ENCODE measurements at regions of chr1 and their contacts with region 1.

Region 1: DNA sequence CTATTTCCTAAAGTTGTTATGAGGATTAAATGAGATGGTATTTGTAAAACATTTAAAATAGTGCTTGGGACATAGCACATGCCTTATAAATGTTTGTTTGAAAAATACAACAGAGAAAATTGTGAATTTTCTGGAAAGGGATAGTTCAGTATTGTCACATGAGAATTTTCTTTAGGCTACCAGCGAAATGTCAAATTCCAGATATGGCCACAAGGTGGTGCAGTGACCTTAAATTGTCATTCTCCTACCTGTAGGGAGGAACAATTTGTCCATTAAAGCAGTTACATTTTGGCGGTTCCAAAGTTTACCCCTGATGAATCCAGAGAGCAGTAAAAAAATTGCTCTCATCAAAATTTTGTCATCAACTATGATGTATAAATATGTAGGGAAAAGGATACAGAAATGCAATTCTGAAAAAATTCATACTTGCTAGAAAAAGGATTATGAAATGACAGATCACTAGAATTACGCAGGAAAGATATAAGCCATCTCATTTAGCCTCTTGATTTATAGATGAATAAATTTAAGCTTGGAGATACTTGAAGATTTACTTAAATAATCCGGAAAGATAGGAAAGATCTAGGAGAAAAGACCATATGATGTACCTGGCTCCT is 50.2 kb upstream of the TSHB start:
- DNase-seq: peak in 1 of 2 donors; percentile 27
- ATAC-seq: no peak
- H3K4me3 ChIP-seq: no peak overlapping the region
- H3K27ac ChIP-seq: no peak overlapping the region
- H3K4me1 ChIP-seq: no peaks in the 10 kb centered on the region
- H3K27me3 ChIP-seq: no peaks in the 10 kb centered on the region
- CTCF ChIP-seq: peak; percentile 64 to 78 (median 67)
- POLR2A ChIP-seq: no peak

Region 2: GRCh38 chr1:115052454-115053083 is 73.2 kb after region 1 on chr1:
- in situ Hi-C with region 1: no loop called
- intact Hi-C with region 1: loop called (anchors 5 kb)
- DNase-seq: peak in 1 of 2 donors; percentile 39
- ATAC-seq: peak in 1 of 2 donors; percentile 81
- H3K4me3 ChIP-seq: no peak overlapping the region
- H3K27ac ChIP-seq: no peak overlapping the region
- H3K4me1 ChIP-seq: no peaks in the 10 kb centered on the region
- H3K27me3 ChIP-seq: no peaks in the 10 kb centered on the region
- CTCF ChIP-seq: peak; percentile 51 to 78 (median 59)
- POLR2A ChIP-seq: no peak

Region 3: GRCh38 chr1:115107516-115108260 is 128.3 kb after region 1 on chr1:
- in situ Hi-C with region 1: loop called (anchors 5 kb)
- intact Hi-C with region 1: no loop called
- DNase-seq: no peak
- ATAC-seq: no peak
- H3K4me3 ChIP-seq: no peak overlapping the region
- H3K27ac ChIP-seq: no peak overlapping the region
- H3K4me1 ChIP-seq: no peaks in the 10 kb centered on the region
- H3K27me3 ChIP-seq: no peaks in the 10 kb centered on the region
- CTCF ChIP-seq: no peak
- POLR2A ChIP-seq: no peak

Region 4: DNA sequence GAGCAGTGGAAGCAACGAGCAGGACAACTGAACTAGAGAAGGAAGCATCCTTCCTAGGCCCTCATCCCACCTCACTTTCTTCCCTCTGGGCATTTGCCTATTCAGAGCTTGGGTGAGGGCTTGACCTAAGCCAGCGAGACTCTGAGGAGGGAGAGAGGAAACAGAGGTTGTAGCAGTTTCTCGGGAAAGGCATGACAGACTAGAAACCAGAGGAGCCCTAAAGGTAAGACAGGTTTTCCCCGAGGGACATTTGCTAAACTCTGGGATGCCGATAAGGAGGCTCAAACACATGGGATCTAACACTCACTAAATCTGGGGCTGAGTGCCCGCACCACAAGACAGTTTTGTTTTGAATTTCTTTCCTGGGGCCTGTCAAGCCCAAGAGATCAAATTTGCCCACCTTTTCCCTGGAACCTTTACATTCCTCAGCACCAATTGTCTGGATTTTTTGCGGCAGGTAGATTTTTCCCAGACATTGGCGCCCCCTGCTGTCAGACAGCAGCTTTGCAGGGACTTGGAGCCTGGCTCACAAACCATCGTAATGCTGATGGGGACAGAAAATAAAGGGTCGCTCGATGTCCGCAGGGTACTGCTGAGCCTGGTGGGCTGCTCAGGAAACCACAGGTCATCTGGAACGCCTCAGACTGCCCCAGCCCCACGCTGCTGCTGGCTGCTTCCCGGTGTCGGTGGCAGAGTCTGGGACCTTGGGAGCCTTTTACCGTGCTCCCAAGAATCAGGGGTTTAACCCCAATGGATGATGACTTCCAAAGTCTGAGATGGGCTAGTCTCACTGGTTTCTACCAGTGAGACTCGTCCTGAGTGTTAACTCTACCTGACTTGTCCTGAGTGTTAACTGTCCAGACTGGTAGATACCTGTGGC is 133.4 kb after region 1 on chr1:
- in situ Hi-C with region 1: loop called (anchors 5 kb)
- intact Hi-C with region 1: loop called (anchors 1 kb)
- DNase-seq: no peak
- ATAC-seq: peak in 1 of 2 donors; percentile 41
- H3K4me3 ChIP-seq: no peak overlapping the region
- H3K27ac ChIP-seq: no peak overlapping the region
- H3K4me1 ChIP-seq: no peaks in the 10 kb centered on the region
- H3K27me3 ChIP-seq: no peaks in the 10 kb centered on the region
- CTCF ChIP-seq: peak; percentile 63 to 90 (median 85)
- POLR2A ChIP-seq: no peak

Region 5: GRCh38 chr1:115595279-115596079 is 616.1 kb after region 1 on chr1:
- in situ Hi-C with region 1: loop called in 3 of 4 experiments (anchors 5 to 10 kb)
- intact Hi-C with region 1: loop called (anchors 1 kb)
- DNase-seq: peak; percentile 47 to 66
- ATAC-seq: peak; percentile 69 to 77
- H3K4me3 ChIP-seq: no peak overlapping the region
- H3K27ac ChIP-seq: no peak overlapping the region
- H3K4me1 ChIP-seq: no peaks in the 10 kb centered on the region
- H3K27me3 ChIP-seq: no peaks in the 10 kb centered on the region
- CTCF ChIP-seq: peak; percentile 61 to 93 (median 76)
- POLR2A ChIP-seq: no peak